Activated T-helper 2 cell treated with anti-CD3 and anti-CD28 coated beads, Interferon-gamma antibody, Interleukin-2, Interleukin-4, amounts not matched to agents 10 μg/mL and 5 μg/mL and 100 μg/mL, durations not matched to agents 14 hours and 24 hours and 36 hours (primary cell): ENCODE measurements at regions of chr3 and their contacts with region 1.

Region 1: DNA sequence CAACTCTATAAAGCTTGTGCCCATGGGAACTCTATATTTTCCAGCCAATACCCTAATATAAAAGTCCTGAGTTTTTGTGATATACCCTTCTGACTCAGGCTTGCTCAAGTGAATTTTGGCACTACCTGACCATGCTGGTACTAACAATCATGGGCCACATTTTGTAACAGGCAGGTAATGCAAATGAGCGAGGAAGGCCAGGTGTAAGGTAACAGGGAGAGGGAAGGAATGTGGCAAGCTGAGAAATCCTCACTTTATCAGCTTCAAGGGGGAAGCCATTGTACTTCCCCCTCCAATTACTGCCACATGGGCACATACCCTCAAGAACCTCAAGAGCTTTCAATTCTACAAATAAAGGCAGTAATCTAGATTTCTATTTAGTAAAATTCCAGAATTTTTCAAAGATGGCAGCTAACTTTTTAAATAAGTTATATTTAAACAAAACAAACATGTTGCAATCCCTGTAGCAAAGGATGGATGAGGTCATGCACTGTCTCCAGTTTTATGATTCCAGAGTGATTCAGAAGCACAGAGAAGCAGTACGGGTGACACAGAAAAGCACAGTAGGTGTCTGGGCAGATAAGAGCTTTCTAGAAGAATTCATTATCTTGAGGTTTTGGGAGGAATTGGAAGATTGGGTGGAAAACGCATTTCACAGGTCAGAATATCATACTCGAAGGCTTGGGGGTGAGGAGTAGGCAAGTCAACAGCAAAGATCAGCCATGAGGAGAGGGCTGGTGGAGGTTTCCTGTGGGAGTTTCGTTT is 87.6 kb downstream of the FOXP1 start:
- DNase-seq: no peak
- H3K4me3 Mint-ChIP-seq: peak overlapping the region; percentile 66
- H3K27ac Mint-ChIP-seq: peak overlapping the region; percentile 92
- H3K4me1 Mint-ChIP-seq: peaks cover 68% of the 10 kb centered on the region
- H3K27me3 Mint-ChIP-seq: no peaks in the 10 kb centered on the region

Region 2: GRCh38 chr3:71142440-71143161 is 353.3 kb before region 1 on chr3:
- intact Hi-C with region 1: no loop called
- DNase-seq: no peak
- H3K4me3 Mint-ChIP-seq: no peak overlapping the region
- H3K27ac Mint-ChIP-seq: no peak overlapping the region
- H3K4me1 Mint-ChIP-seq: peaks cover 17% of the 10 kb centered on the region
- H3K27me3 Mint-ChIP-seq: no peaks in the 10 kb centered on the region

Region 3: DNA sequence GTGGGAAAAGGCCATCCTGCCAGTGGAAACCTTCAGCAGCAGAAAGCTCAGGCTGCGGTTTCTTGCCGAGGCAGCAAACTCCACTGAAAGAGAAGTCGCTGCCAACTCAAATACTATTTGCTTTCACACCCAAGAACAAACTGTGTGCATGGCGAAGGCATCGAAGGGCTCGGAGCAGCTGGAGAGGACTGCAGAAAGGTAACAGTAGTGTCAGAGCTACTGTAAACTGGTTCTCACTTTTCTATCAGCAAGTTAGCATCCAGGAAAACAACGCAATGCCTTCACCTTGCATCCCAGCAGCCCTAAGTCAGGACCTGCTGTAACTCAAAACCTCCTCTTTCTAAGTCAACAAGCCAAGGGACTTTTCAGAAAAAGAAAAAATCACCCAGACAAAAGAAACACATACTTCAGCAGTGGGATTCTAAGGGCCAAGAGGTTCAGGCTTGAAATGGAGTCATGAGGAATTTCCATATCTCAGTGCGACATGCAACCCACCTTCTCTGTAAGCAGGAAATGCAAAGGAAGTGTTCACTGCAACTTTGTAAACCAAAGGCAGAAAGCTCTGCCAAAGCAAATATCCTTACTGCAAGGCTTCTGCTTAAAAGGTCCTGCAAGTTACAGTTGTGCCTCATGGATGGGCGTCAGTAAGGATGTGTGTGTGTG is 105.8 kb before region 1 on chr3:
- intact Hi-C with region 1: loop called (anchors 2 kb)
- DNase-seq: peak; percentile 20
- H3K4me3 Mint-ChIP-seq: peak overlapping the region; percentile 62
- H3K27ac Mint-ChIP-seq: peak overlapping the region; percentile 81
- H3K4me1 Mint-ChIP-seq: peaks cover 55% of the 10 kb centered on the region
- H3K27me3 Mint-ChIP-seq: no peaks in the 10 kb centered on the region

Region 4: GRCh38 chr3:71428841-71429596 is 66.9 kb before region 1 on chr3:
- intact Hi-C with region 1: no loop called
- DNase-seq: no peak
- H3K4me3 Mint-ChIP-seq: no peak overlapping the region
- H3K27ac Mint-ChIP-seq: peak overlapping the region; percentile 18
- H3K4me1 Mint-ChIP-seq: peaks cover 57% of the 10 kb centered on the region
- H3K27me3 Mint-ChIP-seq: no peaks in the 10 kb centered on the region

Region 5: DNA sequence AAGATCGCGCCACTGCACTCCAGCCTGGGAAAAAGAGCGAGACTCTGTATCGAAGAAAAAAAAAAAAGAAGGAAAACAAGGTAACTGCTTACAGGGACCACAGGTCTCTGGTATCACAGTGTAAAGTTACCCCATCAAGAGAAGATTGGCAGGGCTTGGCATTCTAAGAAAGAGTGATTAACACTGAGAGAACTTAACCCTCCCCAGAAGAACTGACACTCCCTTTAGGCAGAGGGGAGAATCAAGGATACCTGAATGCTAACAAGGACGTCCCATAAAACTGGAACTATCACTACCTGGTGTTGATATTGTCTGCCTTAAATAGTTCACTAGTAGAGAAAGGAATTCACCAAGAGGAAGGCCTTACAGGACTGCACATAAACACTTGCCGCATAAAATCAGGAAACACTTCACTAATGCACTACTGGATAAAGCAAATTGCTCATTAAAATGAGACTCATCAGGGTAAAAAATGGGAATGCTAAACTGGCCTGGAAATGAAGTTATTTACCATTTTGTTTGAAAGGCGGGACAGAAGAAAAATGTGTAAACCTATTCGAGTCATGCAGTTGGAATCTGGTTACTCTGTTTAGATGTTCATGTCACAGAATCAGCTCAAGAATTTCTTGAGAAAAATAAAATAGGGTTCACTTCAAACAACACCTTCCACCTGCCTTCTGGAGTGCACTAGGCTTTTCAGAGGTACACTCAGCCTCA is 34.0 kb before region 1 on chr3:
- intact Hi-C with region 1: loop called (anchors 1 kb)
- DNase-seq: no peak
- H3K4me3 Mint-ChIP-seq: no peak overlapping the region
- H3K27ac Mint-ChIP-seq: peak overlapping the region; percentile 95
- H3K4me1 Mint-ChIP-seq: peaks cover 54% of the 10 kb centered on the region
- H3K27me3 Mint-ChIP-seq: no peaks in the 10 kb centered on the region

Region 6: GRCh38 chr3:71478568-71478967 is 17.3 kb before region 1 on chr3:
- intact Hi-C with region 1: loop called (anchors 1 kb)
- DNase-seq: peak; percentile 48
- H3K4me3 Mint-ChIP-seq: no peak overlapping the region
- H3K27ac Mint-ChIP-seq: peak overlapping the region; percentile 85
- H3K4me1 Mint-ChIP-seq: peaks cover 40% of the 10 kb centered on the region
- H3K27me3 Mint-ChIP-seq: no peaks in the 10 kb centered on the region

Region 7: DNA sequence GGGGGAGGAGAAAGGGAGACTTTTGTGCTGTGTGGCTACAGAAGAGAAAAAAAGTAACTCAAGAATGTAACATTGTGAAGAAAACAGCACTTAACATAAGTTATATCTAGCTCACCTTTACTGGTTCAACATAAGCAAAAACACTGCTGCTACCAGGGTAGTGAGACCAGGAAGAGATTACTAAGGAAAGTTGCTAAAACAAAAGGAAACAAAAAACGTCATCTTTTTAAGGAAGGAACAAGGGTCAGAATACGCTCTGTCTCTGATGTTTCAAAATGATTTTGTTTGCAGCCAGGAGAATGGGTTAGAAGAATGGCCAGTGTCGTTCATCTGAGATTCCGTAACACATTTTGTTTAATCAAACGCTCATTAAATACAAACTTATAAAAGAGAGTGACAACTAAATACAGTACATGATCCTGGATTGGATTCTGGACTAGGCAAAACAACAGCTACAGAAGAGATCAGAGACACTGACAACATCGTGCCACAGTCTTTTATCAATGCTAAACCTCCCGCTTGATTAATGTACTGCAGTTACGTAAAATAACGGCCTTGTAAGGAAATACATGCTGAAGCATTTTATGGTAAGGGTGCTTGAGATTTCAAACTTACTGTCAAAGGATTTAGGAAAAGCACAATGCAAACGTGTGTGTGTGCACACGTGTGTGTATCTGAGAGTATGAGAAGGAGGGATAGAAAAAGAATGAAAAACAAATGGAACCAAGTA is 19.9 kb after region 1 on chr3:
- intact Hi-C with region 1: no loop called
- DNase-seq: no peak
- H3K4me3 Mint-ChIP-seq: no peak overlapping the region
- H3K27ac Mint-ChIP-seq: no peak overlapping the region
- H3K4me1 Mint-ChIP-seq: peaks cover 15% of the 10 kb centered on the region
- H3K27me3 Mint-ChIP-seq: no peaks in the 10 kb centered on the region